ENCODE measurements at regions of chr3 and their contacts with region 1.

Region 1: DNA sequence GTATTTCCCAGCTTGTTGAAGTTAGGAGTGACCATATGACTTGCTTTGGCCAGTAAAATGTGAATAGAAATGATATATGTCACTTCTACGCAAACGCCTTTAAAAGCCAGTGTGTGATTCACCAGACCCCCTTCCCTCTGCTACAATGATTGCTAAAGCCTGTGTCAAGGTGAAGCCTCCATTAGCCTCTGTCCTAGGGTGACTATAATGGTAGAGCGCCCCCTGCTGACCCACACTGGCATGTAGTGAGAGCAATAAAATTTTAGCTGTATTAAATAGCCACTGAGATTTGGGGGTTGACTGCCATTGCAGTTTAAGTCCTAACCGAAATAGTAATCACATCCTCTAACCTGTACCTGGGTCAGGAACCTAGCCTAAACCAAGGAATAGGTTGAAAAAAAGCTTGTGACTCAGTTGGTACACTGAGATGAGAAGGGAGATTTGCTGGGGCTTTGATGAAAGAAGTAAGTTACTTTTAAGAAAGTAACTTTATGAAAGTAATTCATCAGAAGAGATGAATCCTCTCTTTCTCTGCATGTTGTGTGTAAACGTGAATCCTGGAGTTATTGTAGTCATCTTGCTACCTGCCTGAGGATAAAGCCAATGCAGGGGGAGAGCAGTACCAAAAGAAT is 52.6 kb downstream of the GTF2E1 start:
- DNase-seq: peak; percentile 57
- ATAC-seq: peak; percentile 90
- H3K4me3 ChIP-seq: no peak overlapping the region
- H3K27ac ChIP-seq: no peak overlapping the region
- H3K4me1 ChIP-seq: no peaks in the 10 kb centered on the region
- H3K27me3 ChIP-seq: no peaks in the 10 kb centered on the region
- CTCF ChIP-seq: peak; percentile 92

Region 2: GRCh38 chr3:119175872-119176756 is 1619.0 kb before region 1 on chr3:
- CTCF ChIA-PET with region 1: no interaction called
- POLR2A ChIA-PET with region 1: no interaction called
- in situ Hi-C with region 1: no loop called
- intact Hi-C with region 1: no loop called
- DNase-seq: peak; percentile 2
- ATAC-seq: peak; percentile 31; the same call in 1 of the 2 replicates
- H3K4me3 ChIP-seq: no peak overlapping the region
- H3K27ac ChIP-seq: no peak overlapping the region; the same call in 1 of the 2 replicates
- H3K4me1 ChIP-seq: peaks cover 5% of the 10 kb centered on the region; the same call in 1 of the 2 replicates
- H3K27me3 ChIP-seq: no peaks in the 10 kb centered on the region
- CTCF ChIP-seq: no peak

Region 3: GRCh38 chr3:120558771-120559241 is 236.3 kb before region 1 on chr3:
- CTCF ChIA-PET with region 1: interaction called, 4 read pairs
- POLR2A ChIA-PET with region 1: no interaction called
- in situ Hi-C with region 1: no loop called
- intact Hi-C with region 1: loop called (anchors 1 kb)
- DNase-seq: no peak
- ATAC-seq: peak; percentile 83
- H3K4me3 ChIP-seq: peak overlapping the region; percentile 51 to 76
- H3K27ac ChIP-seq: peak overlapping the region; percentile 17; the same call in 1 of the 2 replicates
- H3K4me1 ChIP-seq: peaks cover 14% of the 10 kb centered on the region
- H3K27me3 ChIP-seq: peaks cover 2% of the 10 kb centered on the region; the same call in 1 of the 2 replicates
- CTCF ChIP-seq: peak; percentile 99

Measured in Panc1 (cell line).